ENCODE measurements at regions of chr2 and their contacts with region 1.

Region 1: DNA sequence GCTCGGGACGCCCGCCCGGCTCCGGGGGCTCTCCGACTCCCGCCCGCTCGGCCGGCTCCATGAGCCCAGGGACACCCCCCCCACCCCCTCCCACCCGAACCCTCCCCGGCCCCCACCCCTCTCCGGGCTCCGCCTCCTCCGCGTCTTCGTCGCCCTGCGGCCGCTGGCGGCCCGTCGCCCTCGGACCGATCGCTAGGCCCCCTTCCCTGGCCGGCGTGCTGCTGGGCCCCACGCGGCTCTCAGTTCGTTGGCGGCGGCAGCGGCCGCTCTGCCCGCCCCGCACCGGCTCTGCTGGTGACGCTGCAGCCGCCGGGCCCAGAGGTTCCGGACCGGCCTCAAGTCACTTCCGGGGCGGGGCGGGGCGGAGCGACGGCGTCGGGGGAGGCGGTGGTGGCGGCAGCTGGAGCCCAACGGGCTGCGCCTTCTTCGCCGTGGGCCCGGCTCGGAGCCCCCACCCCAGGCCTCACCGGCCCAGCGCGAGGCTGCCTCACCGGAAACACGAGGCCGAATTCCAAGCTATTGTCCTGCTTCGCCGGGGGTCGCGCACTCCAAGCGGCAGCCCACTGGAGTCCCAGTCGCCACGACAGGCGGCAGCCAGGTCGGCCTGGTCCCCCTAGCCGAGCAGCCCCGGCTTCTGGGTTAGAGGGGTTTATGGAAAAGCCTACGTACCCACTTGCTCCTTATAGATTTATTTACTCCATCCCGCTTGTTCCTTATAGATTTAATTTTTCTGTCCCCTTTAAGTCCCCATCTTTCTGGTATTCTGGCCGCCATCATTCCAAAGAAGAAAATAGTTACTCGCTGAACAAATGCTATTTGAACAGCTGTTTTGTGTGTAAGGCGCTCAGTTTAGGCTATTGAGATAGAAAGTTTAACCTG is at the start of gene PSME4:
- DNase-seq: peak; percentile 97
- ATAC-seq: peak; percentile 90
- H3K4me3 Mint-ChIP-seq: peak within 1 kb of the TSS; percentile 94
- H3K27ac Mint-ChIP-seq: peak within 1 kb of the TSS; percentile 94
- H3K4me1 Mint-ChIP-seq: peaks cover 49% of the 10 kb centered on the region
- H3K27me3 Mint-ChIP-seq: no peaks in the 10 kb centered on the region
- CTCF ChIP-seq: no peak
- total RNA-seq, gene PSME4: 73.2 and 74.3 TPM in 2 replicates

Region 2: DNA sequence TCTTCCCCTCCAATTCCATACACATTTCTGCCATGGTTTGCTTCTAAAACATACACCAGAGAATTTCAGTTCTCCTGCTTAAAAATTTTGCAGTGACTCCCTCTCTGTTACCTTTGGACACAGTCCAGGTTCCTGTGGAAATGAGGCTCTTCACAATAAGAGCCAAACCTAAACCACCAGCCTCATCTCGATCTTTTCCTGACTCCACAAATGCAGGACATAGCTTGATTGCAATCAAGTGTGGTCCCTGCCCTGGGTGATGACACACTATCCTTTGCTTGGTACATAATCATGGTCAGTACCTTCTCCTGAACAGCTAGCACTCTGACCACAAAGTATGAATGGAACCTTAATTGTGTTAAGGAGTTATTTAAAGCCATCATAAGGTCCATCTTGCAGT is 338.2 kb before region 1 on chr2:
- CTCF ChIA-PET with region 1: no interaction called
- POLR2A ChIA-PET with region 1: no interaction called
- intact Hi-C with region 1: no loop called
- DNase-seq: no peak
- ATAC-seq: no peak
- H3K4me3 Mint-ChIP-seq: no peak overlapping the region
- H3K27ac Mint-ChIP-seq: no peak overlapping the region
- H3K4me1 Mint-ChIP-seq: no peaks in the 10 kb centered on the region
- H3K27me3 Mint-ChIP-seq: peaks cover 2% of the 10 kb centered on the region
- CTCF ChIP-seq: no peak

Region 3: DNA sequence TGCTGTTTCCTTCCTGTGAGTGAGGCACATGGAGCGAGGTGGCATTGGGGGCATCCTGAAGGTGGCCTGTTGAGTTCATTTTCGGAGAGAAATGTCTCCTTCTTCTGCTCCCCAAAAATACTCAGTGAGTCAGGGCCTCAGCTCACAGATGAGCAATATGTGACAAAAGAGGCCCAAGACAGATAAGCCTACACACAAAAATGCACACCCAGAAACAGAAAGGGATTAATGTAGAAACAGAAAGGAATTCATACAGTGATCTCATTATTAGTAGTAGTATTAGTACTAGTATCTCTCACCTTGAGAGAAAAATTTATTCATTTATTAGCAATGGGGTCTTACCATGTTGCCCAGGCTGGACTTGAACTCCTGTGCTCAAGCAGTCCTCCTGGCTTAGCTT is 116.3 kb before region 1 on chr2:
- CTCF ChIA-PET with region 1: no interaction called
- POLR2A ChIA-PET with region 1: no interaction called
- intact Hi-C with region 1: no loop called
- DNase-seq: no peak
- ATAC-seq: no peak
- H3K4me3 Mint-ChIP-seq: no peak overlapping the region
- H3K27ac Mint-ChIP-seq: no peak overlapping the region
- H3K4me1 Mint-ChIP-seq: no peaks in the 10 kb centered on the region
- H3K27me3 Mint-ChIP-seq: no peaks in the 10 kb centered on the region
- CTCF ChIP-seq: no peak

Region 4: DNA sequence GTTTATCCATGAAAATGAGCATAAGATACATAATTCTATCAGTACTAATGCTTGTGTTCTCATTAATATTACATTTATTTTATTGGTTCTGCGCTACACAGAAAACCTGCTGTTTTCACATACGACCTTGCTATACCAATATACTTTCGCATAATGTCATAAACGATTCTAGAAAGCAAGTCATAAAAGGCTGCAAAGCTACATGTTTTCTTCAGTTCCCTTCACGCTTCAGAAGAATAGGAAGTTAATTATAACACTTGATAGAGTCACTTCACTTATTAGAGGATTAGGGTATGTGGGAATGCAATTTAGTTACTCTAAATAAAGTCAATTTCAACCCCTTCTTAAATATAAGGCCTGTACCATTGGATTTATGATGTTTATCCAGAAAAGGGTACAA is 29.2 kb before region 1 on chr2:
- CTCF ChIA-PET with region 1: no interaction called
- POLR2A ChIA-PET with region 1: interaction called, 6 read pairs
- intact Hi-C with region 1: loop called (anchors 5 kb)
- DNase-seq: no peak
- ATAC-seq: peak; percentile 66
- H3K4me3 Mint-ChIP-seq: no peak overlapping the region
- H3K27ac Mint-ChIP-seq: peak overlapping the region; percentile 59
- H3K4me1 Mint-ChIP-seq: peaks cover 60% of the 10 kb centered on the region
- H3K27me3 Mint-ChIP-seq: no peaks in the 10 kb centered on the region
- CTCF ChIP-seq: no peak

Region 5: GRCh38 chr2:53960476-53960875 is 10.5 kb before region 1 on chr2:
- CTCF ChIA-PET with region 1: no interaction called
- POLR2A ChIA-PET with region 1: interaction called, 4 read pairs
- intact Hi-C with region 1: loop called (anchors 1 kb)
- DNase-seq: no peak
- ATAC-seq: no peak
- H3K4me3 Mint-ChIP-seq: no peak overlapping the region
- H3K27ac Mint-ChIP-seq: no peak overlapping the region
- H3K4me1 Mint-ChIP-seq: peaks cover 77% of the 10 kb centered on the region
- H3K27me3 Mint-ChIP-seq: no peaks in the 10 kb centered on the region
- CTCF ChIP-seq: no peak

Region 6: DNA sequence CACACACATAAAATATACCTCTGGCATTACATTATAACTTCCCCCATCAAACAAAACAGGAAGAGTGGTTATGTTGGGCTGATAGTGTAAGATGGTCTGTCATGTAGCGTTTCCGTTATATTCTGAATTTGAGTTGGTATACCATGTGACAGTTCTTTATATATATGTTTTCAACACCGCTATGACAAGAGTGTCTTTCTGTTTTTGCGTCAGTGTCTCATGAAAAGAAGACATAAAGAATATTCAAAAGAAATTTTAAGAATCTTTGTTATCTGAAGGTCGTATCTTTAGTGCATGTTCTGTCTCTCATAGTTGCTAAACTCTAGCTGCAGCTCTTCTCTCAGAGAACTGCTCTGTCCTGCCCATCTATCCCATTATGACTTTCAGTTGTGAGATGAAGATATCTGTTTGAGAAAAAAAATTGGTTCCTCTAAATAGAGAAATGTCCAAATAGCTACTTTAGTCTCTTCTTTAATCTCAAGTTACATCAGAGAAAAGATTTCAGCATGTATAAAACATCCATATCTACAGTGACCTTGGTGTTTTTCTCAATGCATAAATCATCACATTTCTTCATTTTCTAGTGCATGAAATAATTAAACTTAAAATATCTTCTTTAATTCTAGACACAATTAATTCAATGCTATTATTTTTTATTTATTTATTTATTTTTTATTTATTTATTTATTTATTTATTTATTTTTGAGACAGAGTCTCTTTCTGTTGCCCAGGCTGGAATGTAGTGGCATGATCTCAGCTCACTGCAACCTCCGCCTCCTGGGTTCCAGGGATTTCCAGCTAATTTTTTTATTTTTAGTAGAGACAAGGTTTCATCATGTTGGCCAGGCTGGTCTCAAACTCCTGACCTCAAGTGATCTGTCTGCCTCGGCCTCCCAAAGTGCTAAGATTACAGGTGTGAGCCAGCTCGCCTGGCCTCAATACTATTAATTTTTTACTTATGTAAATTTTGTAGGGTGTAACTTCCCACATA is 24.1 kb after region 1 on chr2:
- CTCF ChIA-PET with region 1: no interaction called
- POLR2A ChIA-PET with region 1: interaction called, 13 read pairs
- intact Hi-C with region 1: no loop called
- DNase-seq: no peak
- ATAC-seq: peak; percentile 87
- H3K4me3 Mint-ChIP-seq: peak overlapping the region; percentile 52
- H3K27ac Mint-ChIP-seq: peak overlapping the region; percentile 76
- H3K4me1 Mint-ChIP-seq: peaks cover 29% of the 10 kb centered on the region
- H3K27me3 Mint-ChIP-seq: no peaks in the 10 kb centered on the region
- CTCF ChIP-seq: no peak

Region 7: GRCh38 chr2:54115284-54116137 is 144.5 kb after region 1 on chr2 and contains the start of gene ACYP2:
- CTCF ChIA-PET with region 1: no interaction called
- POLR2A ChIA-PET with region 1: interaction called, 25 read pairs
- intact Hi-C with region 1: loop called (anchors 1 kb)
- DNase-seq: peak; percentile 89
- ATAC-seq: peak; percentile 84
- H3K4me3 Mint-ChIP-seq: peak within 1 kb of the TSS; percentile 97
- H3K27ac Mint-ChIP-seq: peak within 1 kb of the TSS; percentile 100
- H3K4me1 Mint-ChIP-seq: peaks cover 26% of the 10 kb centered on the region
- H3K27me3 Mint-ChIP-seq: no peaks in the 10 kb centered on the region
- CTCF ChIP-seq: no peak
- total RNA-seq, gene ACYP2: 14.9 and 15.9 TPM in 2 replicates

Measured in activated B cell treated with CpG ODN at 0.5 μM for 24 hours (primary cell).